Sigmoid colon (tissue), 7 donors: ENCODE measurements at regions of chr4 and their contacts with region 1.

Region 1: GRCh38 chr4:107183155-107183774 is 147.2 kb upstream of the DKK2 start:
- DNase-seq: no peak
- H3K4me3 ChIP-seq: no peak overlapping the region
- H3K27ac ChIP-seq: no peak overlapping the region
- H3K4me1 ChIP-seq: no peaks in the 10 kb centered on the region
- H3K27me3 ChIP-seq: no peaks in the 10 kb centered on the region
- CTCF ChIP-seq: peak; percentile 53 to 81 (median 70)
- EP300 ChIP-seq: no peak
- POLR2A ChIP-seq: no peak

Region 2: DNA sequence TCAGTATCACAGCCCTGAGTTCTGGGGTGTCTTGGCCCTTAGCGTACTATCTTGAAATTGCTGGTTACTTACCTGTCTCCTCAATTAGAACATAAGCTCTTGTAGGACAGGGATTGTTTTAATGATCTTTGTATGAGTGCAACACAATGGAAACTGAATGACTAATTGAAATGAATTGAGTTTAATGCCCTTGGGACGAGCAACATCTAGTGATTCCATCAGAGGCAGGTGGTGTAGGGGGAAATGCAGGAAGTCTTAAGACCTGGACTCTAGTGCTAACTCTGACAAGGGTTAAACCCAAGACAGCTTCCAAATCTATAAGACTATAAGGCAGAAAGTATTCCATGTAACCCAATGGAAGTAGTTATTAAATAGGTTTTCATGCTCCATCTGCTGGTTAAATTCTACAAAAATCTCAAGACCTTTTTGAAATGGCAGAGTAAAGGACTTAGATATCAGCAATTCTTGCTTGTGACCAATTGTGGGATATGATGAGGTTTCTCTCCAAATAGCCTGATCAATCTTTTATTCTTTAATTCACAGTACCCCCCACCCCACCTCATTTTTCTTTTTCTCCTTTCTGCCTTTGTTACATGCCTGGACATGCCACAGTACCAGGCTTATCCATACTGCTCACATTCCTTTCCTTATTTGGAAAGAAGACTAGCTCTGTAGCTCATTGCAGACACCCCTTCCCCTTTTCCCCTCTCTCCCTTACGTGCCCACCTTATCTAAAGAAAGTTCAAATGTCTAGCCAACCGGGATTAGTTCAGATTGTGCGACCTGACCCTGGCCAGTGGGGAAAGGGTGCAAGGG is 196.0 kb after region 1 on chr4:
- intact Hi-C with region 1: loop called (anchors 5 kb)
- DNase-seq: no peak
- H3K4me3 ChIP-seq: no peak overlapping the region
- H3K27ac ChIP-seq: no peak overlapping the region
- H3K4me1 ChIP-seq: peaks cover 0 to 9% (median 2%) of the 10 kb centered on the region in 4 donors
- H3K27me3 ChIP-seq: no peaks in the 10 kb centered on the region
- CTCF ChIP-seq: peak in 1 of 4 experiments; percentile 12
- EP300 ChIP-seq: no peak
- POLR2A ChIP-seq: no peak

Region 3: GRCh38 chr4:107519053-107519452 is 335.8 kb after region 1 on chr4:
- intact Hi-C with region 1: loop called (anchors 10 kb)
- DNase-seq: no peak
- H3K4me3 ChIP-seq: no peak overlapping the region
- H3K27ac ChIP-seq: no peak overlapping the region
- H3K4me1 ChIP-seq: no peaks in the 10 kb centered on the region
- H3K27me3 ChIP-seq: no peaks in the 10 kb centered on the region
- CTCF ChIP-seq: peak in 3 of 4 experiments; percentile 19 to 48 (median 22)
- EP300 ChIP-seq: no peak
- POLR2A ChIP-seq: no peak